Activated T-helper 1 cell treated with anti-CD3 and anti-CD28 coated beads, Interleukin-12 subunit alpha, Interleukin-12 subunit beta, Interleukin-2, Interleukin-4 antibody, amounts not matched to agents 30 ng/mL and 10 ng/mL and 1 ng/mL, durations not matched to agents 14 hours and 24 hours and 36 hours (primary cell): ENCODE measurements at regions of chr17 and their contacts with region 1.

Region 1: DNA sequence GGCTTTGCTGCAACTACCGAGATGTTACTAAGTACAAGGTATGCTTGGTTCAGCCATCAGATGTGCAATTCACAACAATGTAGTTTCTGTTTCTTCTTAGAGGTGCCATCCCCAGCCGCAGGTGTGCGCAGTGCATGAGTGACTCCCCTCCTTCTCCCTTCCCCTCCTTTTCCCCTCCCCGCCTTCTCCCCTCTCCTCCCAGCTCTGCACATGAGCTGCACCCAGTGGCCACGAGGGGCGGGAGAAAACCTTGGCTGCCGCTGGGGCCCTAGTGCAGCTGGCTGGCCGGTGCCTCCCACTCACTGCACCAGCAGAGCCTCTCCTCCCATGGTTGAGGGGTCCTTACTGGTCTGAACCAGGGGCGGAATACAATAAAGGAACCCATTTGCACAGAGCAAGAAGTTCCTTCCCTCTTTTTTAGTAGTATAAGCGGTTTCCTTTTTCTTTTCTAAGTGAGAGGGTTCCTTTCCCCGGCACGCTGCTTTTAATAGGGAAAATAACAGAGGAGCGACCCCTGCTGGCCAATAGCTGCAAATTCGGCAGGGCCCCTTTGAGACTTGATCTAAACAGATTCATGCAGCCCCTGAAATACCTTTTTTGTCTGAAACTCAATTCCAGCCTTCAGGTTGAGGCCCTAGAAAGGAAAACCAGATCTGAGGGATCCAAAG is 7.8 kb upstream of the CCL15 start:
- DNase-seq: no peak
- H3K4me3 Mint-ChIP-seq: no peak overlapping the region
- H3K27ac Mint-ChIP-seq: no peak overlapping the region
- H3K4me1 Mint-ChIP-seq: peaks cover 7% of the 10 kb centered on the region
- H3K27me3 Mint-ChIP-seq: peaks cover 8% of the 10 kb centered on the region

Region 2: DNA sequence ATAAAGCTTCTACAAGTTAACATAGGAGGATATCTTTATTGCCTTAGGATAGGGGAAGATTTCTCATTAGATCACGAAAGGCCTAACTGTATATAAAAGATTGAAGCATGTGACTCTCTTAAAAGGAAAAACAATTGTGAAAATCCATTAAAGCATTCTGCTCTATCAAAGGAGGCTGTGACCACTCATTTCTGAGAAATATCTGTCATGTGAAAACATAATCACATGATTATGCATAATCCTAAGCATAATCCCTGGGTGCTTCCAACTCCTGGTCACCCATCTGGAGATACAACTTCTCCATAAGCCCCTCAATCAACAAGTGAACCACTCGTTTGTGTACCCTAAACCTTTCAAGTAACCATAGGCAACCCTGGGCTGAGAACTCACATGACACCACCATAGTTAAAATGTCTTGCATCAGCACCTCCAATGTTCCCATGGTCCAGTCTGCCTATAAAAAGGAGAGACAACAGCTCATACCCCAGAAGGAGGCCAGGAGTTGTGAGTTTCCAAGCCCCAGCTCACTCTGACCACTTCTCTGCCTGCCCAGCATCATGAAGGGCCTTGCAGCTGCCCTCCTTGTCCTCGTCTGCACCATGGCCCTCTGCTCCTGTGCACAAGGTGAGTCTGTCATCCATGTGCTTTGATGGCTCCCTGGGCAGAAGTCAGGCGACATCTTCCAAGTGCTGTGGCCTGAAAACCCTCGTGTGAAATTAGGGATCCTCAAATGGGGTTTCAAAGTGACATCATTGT is 54.8 kb after region 1 on chr17 and contains the start of gene CCL18:
- intact Hi-C with region 1: loop called (anchors 5 kb)
- DNase-seq: no peak
- H3K4me3 Mint-ChIP-seq: no peak within 1 kb of the TSS
- H3K27ac Mint-ChIP-seq: no peak within 1 kb of the TSS
- H3K4me1 Mint-ChIP-seq: peaks cover 9% of the 10 kb centered on the region
- H3K27me3 Mint-ChIP-seq: peaks cover 6% of the 10 kb centered on the region
- total RNA-seq, gene CCL18: not detected in 2 replicates